ENCODE measurements at regions of chr16 and their contacts with region 1.

Region 1: DNA sequence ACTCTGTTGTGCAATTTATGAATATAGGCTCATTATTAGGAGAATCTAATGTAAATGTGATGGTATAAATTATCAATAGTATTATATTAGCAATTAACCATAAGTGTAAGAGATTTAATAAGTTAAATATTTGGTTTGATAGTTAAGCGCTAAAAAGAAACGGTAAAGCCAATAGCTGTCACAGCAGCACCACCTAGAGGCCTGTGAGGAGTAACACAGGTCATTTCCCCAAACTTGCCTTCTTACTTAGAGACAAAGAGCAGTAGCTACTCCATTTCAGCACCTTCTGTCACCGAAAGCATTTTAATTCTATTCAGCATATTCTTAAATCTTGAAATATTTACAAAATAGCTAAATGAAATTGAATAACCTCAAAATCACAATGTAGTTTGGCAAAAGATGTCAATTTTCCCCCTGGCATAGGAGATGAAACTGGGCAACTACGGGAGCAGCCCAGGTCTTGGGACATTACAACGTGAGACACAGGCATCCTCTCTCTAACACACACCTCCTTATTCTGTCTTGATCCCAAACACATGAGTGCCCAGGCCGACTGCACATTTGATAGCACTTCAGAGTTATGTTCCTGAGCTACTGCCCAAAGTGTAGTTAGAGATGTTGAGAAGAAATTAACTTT is 14.2 kb upstream of the DYNLRB2 start:
- DNase-seq: no peak
- ATAC-seq: peak; percentile 82
- H3K4me3 ChIP-seq: no peak overlapping the region
- H3K27ac ChIP-seq: no peak overlapping the region
- H3K4me1 ChIP-seq: no peaks in the 10 kb centered on the region
- H3K27me3 ChIP-seq: no peaks in the 10 kb centered on the region
- CTCF ChIP-seq: peak; percentile 77 to 80 (median 79)
- EP300 ChIP-seq: no peak
- POLR2A ChIP-seq: no peak
- RAD21 ChIP-seq: peak; percentile 93

Region 2: DNA sequence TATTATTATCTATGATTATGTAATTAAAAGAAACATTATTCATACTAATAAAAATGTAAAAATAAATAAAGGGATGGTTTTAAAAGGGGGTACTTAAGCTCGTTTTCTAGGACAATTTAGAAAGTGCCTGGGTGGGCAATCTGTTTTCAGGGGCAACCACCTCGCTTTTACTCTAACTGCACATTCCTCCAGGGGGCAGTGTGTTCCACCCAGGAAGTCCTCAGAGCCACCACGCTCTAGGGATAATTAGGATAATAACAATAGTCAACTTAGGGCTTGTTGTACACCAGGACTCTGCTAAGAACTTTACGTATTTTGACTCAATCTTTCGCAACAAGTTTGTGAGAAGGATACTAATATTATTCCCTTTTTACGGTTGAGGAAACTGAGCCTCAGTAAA is 529.3 kb before region 1 on chr16:
- CTCF ChIA-PET with region 1: no interaction called
- POLR2A ChIA-PET with region 1: no interaction called
- RAD21 ChIA-PET with region 1: no interaction called
- SMC1A ChIA-PET with region 1: interaction called, 10 read pairs
- in situ Hi-C with region 1: no loop called
- intact Hi-C with region 1: no loop called
- DNase-seq: no peak
- ATAC-seq: no peak
- H3K4me3 ChIP-seq: no peak overlapping the region
- H3K27ac ChIP-seq: no peak overlapping the region
- H3K4me1 ChIP-seq: no peaks in the 10 kb centered on the region
- H3K27me3 ChIP-seq: no peaks in the 10 kb centered on the region
- CTCF ChIP-seq: peak; percentile 25 to 35 (median 27); a peak in 3 of 6 replicates
- EP300 ChIP-seq: no peak
- POLR2A ChIP-seq: no peak
- RAD21 ChIP-seq: peak; percentile 45

Region 3: GRCh38 chr16:80480664-80481063 is 45.9 kb before region 1 on chr16:
- CTCF ChIA-PET with region 1: interaction called, 17 read pairs
- POLR2A ChIA-PET with region 1: no interaction called
- RAD21 ChIA-PET with region 1: interaction called, 3 read pairs
- SMC1A ChIA-PET with region 1: interaction called, 6 read pairs
- in situ Hi-C with region 1: no loop called
- intact Hi-C with region 1: no loop called
- DNase-seq: peak; percentile 46
- ATAC-seq: peak; percentile 84
- H3K4me3 ChIP-seq: no peak overlapping the region
- H3K27ac ChIP-seq: no peak overlapping the region
- H3K4me1 ChIP-seq: no peaks in the 10 kb centered on the region
- H3K27me3 ChIP-seq: no peaks in the 10 kb centered on the region
- CTCF ChIP-seq: no peak
- EP300 ChIP-seq: no peak
- POLR2A ChIP-seq: no peak
- RAD21 ChIP-seq: no peak

Region 4: GRCh38 chr16:80580109-80580832 is 53.7 kb after region 1 on chr16:
- CTCF ChIA-PET with region 1: interaction called, 12 read pairs
- POLR2A ChIA-PET with region 1: no interaction called
- RAD21 ChIA-PET with region 1: interaction called, 4 read pairs
- SMC1A ChIA-PET with region 1: interaction called, 7 read pairs
- in situ Hi-C with region 1: no loop called
- intact Hi-C with region 1: no loop called
- DNase-seq: peak; percentile 89
- ATAC-seq: peak; percentile 92
- H3K4me3 ChIP-seq: no peak overlapping the region
- H3K27ac ChIP-seq: peak overlapping the region; percentile 92
- H3K4me1 ChIP-seq: peaks cover 30% of the 10 kb centered on the region
- H3K27me3 ChIP-seq: no peaks in the 10 kb centered on the region
- CTCF ChIP-seq: peak in 1 of 3 experiments; percentile 44; a peak in 2 of 6 replicates
- EP300 ChIP-seq: peak; percentile 51 to 63; a peak in 2 of 4 replicates
- POLR2A ChIP-seq: peak; percentile 35; the same call in 1 of the 2 replicates
- RAD21 ChIP-seq: peak; percentile 27

Region 5: GRCh38 chr16:80627108-80627507 is 100.6 kb after region 1 on chr16:
- CTCF ChIA-PET with region 1: no interaction called
- POLR2A ChIA-PET with region 1: no interaction called
- RAD21 ChIA-PET with region 1: no interaction called
- SMC1A ChIA-PET with region 1: no interaction called
- in situ Hi-C with region 1: no loop called
- intact Hi-C with region 1: no loop called
- DNase-seq: no peak
- ATAC-seq: 0 out of 3 replicates have a peak, but pooled peaks have one; percentile 26
- H3K4me3 ChIP-seq: no peak overlapping the region
- H3K27ac ChIP-seq: no peak overlapping the region
- H3K4me1 ChIP-seq: peaks cover 13% of the 10 kb centered on the region; the same call in 1 of the 2 replicates
- H3K27me3 ChIP-seq: no peaks in the 10 kb centered on the region
- CTCF ChIP-seq: no peak
- EP300 ChIP-seq: no peak
- POLR2A ChIP-seq: no peak
- RAD21 ChIP-seq: no peak

Region 6: DNA sequence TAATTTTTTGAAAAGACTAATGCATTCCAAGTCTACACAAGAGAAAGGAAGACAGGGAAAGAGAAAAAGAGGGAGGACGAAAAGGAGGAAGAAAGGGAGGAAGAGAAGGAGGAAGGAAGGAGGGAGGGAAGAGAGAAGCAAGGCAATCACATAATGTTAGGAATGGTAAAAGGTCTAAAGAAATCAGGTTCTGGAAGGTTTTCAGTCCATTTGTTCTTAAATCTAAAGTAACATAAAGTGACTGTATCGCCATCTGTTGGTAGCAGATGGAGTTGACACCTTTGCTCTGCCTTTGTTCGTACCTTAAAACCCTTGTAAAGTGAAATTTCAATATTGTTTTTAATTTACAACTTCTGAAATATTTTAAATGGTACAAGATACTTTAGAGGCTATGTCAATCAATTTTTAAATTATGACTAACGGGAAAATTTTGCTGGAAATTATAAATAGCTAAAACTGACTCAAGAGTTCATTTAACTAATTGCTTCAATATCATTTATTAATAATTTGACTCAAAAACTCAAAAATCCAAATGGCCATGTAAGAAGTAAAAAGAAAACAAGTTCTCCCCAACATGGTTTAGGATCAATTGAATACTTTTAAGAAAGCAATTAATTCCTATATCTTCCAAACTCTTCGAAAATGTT is 298.3 kb after region 1 on chr16:
- CTCF ChIA-PET with region 1: interaction called, 65 read pairs
- POLR2A ChIA-PET with region 1: no interaction called
- RAD21 ChIA-PET with region 1: interaction called, 39 read pairs
- SMC1A ChIA-PET with region 1: interaction called, 49 read pairs
- in situ Hi-C with region 1: loop called (anchors 25 kb)
- intact Hi-C with region 1: loop called (anchors 1 kb)
- DNase-seq: peak; percentile 7
- ATAC-seq: peak; percentile 59; the same call in 2 of the 3 replicates
- H3K4me3 ChIP-seq: no peak overlapping the region
- H3K27ac ChIP-seq: no peak overlapping the region
- H3K4me1 ChIP-seq: no peaks in the 10 kb centered on the region
- H3K27me3 ChIP-seq: no peaks in the 10 kb centered on the region
- CTCF ChIP-seq: peak; percentile 69 to 75 (median 74)
- EP300 ChIP-seq: no peak
- POLR2A ChIP-seq: no peak
- RAD21 ChIP-seq: peak; percentile 77

Region 7: DNA sequence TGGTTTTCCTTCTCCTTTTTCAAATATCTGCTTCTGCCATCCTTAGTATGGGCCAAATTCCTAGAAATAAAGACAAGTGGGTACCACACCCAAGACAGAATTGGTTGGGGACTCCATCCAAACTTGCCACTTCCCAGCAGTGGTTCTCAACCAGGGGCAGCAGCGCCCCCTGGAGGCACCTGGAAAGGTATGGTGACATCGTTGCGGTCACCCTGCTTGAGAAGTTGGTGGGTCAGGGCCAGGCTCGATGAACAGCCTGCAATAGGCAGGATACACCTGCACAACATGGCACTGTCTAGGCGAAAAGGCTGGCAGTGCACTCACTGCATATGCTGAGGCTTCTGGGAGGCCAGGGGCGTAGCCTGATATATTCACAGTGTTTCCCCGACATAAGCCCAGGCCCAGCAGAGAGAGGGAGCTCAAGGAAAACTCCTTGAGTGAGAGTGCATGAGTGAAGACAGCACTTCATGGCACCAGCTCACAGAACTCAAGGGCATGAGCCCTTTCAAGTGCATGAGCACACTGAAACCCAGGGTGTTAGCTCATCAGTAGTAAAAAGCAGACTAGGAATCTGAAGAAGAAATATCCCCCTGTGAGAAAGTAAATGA is 422.4 kb after region 1 on chr16:
- CTCF ChIA-PET with region 1: interaction called, 8 read pairs
- POLR2A ChIA-PET with region 1: no interaction called
- RAD21 ChIA-PET with region 1: interaction called, 4 read pairs
- SMC1A ChIA-PET with region 1: interaction called, 12 read pairs
- in situ Hi-C with region 1: no loop called
- intact Hi-C with region 1: no loop called
- DNase-seq: no peak
- ATAC-seq: peak; percentile 96
- H3K4me3 ChIP-seq: no peak overlapping the region
- H3K27ac ChIP-seq: no peak overlapping the region
- H3K4me1 ChIP-seq: no peaks in the 10 kb centered on the region
- H3K27me3 ChIP-seq: 0 out of 4 replicates have a peak, but pooled peaks cover 0 to 2% of the 10 kb centered on the region in 2 experiments
- CTCF ChIP-seq: peak; percentile 66 to 84 (median 83)
- EP300 ChIP-seq: no peak
- POLR2A ChIP-seq: no peak
- RAD21 ChIP-seq: peak; percentile 79